ENCODE measurements at regions of chr16 and their contacts with region 1.

Region 1: DNA sequence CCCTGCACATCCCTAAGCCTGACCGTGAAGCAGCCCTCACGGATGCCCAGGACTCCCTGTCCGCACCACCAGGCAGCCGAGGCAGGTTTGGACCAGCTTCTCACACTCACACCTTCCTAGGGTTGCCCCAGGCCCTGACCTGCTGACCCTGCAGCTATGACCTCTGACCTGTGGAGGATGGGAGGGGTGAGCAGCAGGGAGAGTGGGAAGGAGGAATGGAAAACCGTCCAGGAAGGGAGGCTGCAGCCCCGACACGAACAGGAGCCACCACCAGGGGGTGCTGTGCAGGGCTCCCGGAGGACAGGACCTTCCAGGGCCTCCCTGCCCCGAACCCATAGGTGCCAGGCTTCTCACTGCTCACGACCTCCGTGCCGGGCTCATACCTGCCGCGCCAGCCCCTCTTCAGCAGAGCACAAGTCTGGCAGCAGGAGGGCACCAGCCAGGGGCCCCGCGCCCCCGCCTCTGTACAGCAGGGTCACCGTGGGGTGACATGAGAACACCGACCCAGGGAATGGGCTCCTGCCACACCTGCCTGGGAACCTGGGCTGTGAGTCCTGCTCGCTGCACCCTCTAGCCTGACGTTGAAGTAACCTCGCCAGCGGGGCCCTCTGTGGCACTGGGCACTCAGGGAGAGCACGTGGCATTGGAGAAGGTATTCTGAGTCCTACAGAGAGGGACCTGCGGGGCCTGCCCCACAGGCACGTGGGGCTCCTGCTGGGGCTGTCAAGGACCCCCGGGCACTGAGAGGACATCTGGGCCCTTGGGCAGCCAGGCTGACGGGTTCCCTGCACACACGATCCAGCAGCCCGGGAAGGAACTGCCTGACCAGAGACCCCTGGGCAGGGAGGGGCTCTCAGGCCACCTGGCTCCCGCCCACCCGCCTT is 37.6 kb downstream of the CTU2 start:
- DNase-seq: no peak
- H3K4me3 ChIP-seq: no peak overlapping the region
- H3K27ac ChIP-seq: no peak overlapping the region
- H3K4me1 ChIP-seq: peaks cover 65% of the 10 kb centered on the region
- H3K27me3 ChIP-seq: no peaks in the 10 kb centered on the region
- CTCF ChIP-seq: peak; percentile 64 to 84 (median 79)
- POLR2A ChIP-seq: no peak

Region 2: GRCh38 chr16:88468275-88469141 is 275.4 kb before region 1 on chr16:
- intact Hi-C with region 1: no loop called
- DNase-seq: no peak
- H3K4me3 ChIP-seq: no peak overlapping the region
- H3K27ac ChIP-seq: no peak overlapping the region
- H3K4me1 ChIP-seq: peaks cover 8% of the 10 kb centered on the region
- H3K27me3 ChIP-seq: no peaks in the 10 kb centered on the region
- CTCF ChIP-seq: no peak
- POLR2A ChIP-seq: no peak

Region 3: GRCh38 chr16:88686439-88687253 is 57.3 kb before region 1 on chr16 and contains the start of gene SNAI3:
- intact Hi-C with region 1: loop called (anchors 10 kb)
- DNase-seq: no peak
- H3K4me3 ChIP-seq: peak within 1 kb of the TSS; percentile 40 to 51
- H3K27ac ChIP-seq: no peak within 1 kb of the TSS
- H3K4me1 ChIP-seq: peaks cover 24% of the 10 kb centered on the region
- H3K27me3 ChIP-seq: no peaks in the 10 kb centered on the region
- CTCF ChIP-seq: no peak
- POLR2A ChIP-seq: no peak
- total RNA-seq, gene SNAI3: not detected

Region 4: DNA sequence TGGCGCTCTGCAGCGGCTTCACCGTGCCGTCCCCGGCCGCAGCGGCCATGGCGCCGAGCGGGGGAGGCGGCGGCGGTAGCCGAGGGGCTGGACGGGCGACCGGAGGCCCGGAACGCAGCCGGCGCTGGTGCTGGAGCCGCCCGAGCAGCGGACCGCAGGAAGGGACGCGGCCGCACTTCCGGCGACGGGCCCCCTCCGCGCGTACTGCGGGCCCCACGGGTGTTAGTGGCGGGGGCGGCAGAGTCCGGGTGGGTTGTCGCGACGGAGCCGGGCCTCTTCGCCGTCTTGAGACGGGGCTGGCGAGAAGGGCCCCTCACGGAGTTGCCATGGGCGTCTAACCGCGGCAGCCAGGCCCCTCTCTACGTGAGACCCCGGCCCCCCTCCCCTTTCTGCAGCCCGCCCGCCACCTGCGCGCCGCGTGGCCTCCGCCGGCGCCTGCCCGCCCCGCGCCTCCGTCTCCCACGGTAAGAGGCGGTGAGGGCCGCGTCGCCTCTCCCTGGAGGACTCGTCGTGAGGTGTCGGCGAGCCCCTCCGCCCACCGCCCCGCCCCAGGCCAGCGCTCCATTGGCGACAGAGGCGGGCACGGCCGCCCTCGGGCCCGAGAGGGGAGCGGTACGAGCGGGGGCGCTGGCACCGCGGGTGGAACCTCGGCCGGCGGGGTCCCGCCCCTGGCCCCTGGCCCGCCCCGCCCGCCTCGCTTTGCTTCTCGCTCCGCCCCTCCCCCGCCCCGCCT is 977.0 kb after region 1 on chr16 and contains the starts of genes VPS9D1 and ZNF276:
- intact Hi-C with region 1: loop called (anchors 5 kb)
- DNase-seq: no peak
- H3K4me3 ChIP-seq: peak within 1 kb of the TSS; percentile 80 to 91
- H3K27ac ChIP-seq: peak within 1 kb of the TSS; percentile 97
- H3K4me1 ChIP-seq: peaks cover 40% of the 10 kb centered on the region
- H3K27me3 ChIP-seq: no peaks in the 10 kb centered on the region
- CTCF ChIP-seq: no peak
- POLR2A ChIP-seq: no peak
- total RNA-seq, gene VPS9D1: 10.1 TPM
- total RNA-seq, gene ZNF276: 57.0 TPM

Measured in vagina (tissue), 2 donors.